Brain microvascular endothelial cell (primary cell): ENCODE measurements at regions of chr2 and their contacts with region 1.

Region 1: DNA sequence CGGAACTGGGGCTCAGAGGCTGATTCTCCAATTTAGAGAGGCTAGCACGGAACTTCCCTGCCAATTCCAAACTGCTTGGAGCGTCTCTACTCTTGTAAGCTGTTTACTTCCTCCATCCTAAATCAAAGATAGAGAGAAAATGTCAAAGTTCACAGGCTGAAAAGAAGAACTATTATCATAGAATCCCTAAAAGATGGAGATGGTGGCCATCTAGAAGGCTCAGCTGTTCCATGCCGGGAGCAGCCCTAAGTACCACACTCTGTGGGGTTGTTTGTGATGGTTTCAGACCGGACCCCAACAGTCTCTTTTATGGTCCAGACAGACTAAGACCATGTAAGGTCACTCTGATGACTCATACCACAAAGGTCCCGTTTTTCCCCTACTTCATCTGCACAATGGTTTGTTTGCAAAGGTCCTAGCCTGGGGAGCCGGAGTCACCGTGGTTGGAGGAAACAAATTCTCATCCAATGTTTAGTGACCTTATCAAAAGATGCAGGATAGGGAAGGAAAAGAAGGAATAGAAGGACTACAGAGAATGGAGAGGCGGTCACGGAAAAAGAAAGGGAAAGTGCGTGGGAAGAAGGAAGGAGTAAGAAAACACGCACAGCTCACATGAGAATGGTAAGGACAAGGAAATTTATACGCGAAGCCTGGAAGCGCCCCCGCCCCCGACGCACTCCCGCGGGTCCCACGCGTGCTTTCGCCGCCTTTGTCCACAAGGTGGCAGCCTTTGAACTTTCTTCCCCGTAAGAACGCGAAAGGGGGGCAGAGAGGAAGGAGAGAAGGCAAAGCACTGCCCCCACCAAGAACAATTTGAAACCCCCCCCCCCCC is 453 bp upstream of the ANTXR1 start:
- DNase-seq: peak; percentile 56
- H3K4me3 ChIP-seq: peak overlapping the region; percentile 92
- H3K27ac ChIP-seq: peak overlapping the region; percentile 57
- H3K27me3 ChIP-seq: no peaks in the 10 kb centered on the region
- CTCF ChIP-seq: peak; percentile 81

Region 2: GRCh38 chr2:68755071-68755470 is 257.5 kb before region 1 on chr2:
- in situ Hi-C with region 1: no loop called
- DNase-seq: no peak
- H3K4me3 ChIP-seq: no peak overlapping the region
- H3K27ac ChIP-seq: no peak overlapping the region
- H3K27me3 ChIP-seq: no peaks in the 10 kb centered on the region
- CTCF ChIP-seq: no peak

Region 3: GRCh38 chr2:68901199-68901960 is 111.1 kb before region 1 on chr2:
- in situ Hi-C with region 1: no loop called
- DNase-seq: no peak
- H3K4me3 ChIP-seq: no peak overlapping the region
- H3K27ac ChIP-seq: no peak overlapping the region
- H3K27me3 ChIP-seq: no peaks in the 10 kb centered on the region
- CTCF ChIP-seq: peak; percentile 61

Region 4: DNA sequence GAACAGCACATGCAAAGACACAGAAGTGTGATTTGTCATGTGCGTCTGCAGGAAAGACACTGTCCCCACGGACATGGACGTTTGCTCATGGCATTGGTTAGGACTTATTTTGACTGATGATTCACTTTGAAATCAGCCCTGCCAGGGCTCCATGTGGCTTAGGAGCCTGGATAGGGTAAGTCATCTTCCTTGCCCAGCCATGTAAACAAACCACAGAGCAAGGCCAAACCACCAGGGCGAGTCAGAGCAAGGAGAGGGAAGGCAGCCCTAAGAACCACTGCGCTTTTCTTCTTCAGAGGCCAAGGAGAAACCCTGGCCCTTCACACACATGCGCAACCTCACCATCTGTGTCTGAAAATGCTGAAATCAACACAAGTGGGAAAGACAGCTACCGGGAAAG is 285.7 kb after region 1 on chr2:
- in situ Hi-C with region 1: loop called (anchors 25 kb)
- DNase-seq: peak; percentile 92
- H3K4me3 ChIP-seq: no peak overlapping the region
- H3K27ac ChIP-seq: peak overlapping the region; percentile 50
- H3K27me3 ChIP-seq: no peaks in the 10 kb centered on the region
- CTCF ChIP-seq: peak; percentile 21

Region 5: DNA sequence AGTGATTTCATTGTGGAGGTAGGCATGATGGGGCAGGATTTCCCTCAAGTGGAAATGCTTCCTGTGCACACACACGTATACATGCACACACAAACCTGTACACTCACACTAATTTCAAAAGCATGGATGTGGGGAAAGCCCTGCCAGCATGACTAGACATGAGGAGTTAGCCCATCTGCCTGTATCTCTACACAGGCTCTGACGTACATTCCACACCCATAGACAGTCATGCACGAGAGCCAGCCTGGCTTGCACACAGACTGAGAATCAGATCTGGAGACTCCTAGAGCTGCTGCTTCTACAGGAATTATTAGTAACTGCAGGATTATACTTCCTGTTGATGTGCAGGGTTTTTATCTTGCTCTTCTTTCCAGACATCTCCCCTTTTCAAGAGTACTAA is 452.0 kb after region 1 on chr2:
- in situ Hi-C with region 1: no loop called
- DNase-seq: peak; percentile 74
- H3K4me3 ChIP-seq: no peak overlapping the region
- H3K27ac ChIP-seq: peak overlapping the region; percentile 12
- H3K27me3 ChIP-seq: no peaks in the 10 kb centered on the region
- CTCF ChIP-seq: no peak